Heart left ventricle (tissue), 16 donors: ENCODE measurements at regions of chr6 and their contacts with region 1.

Region 1: GRCh38 chr6:112153926-112154607 is 66.7 kb downstream of the FAM229B start:
- DNase-seq: no peak
- ATAC-seq: no peak
- H3K4me3 ChIP-seq: no peak overlapping the region
- H3K27ac ChIP-seq: peak overlapping the region in 3 of 12 donors; percentile 23 to 70 (median 28)
- H3K4me1 ChIP-seq: peaks cover 0 to 32% (median 11%) of the 10 kb centered on the region in 12 donors
- H3K27me3 ChIP-seq: no peaks in the 10 kb centered on the region
- CTCF ChIP-seq: no peak
- POLR2A ChIP-seq: no peak

Region 2: GRCh38 chr6:112076200-112076599 is 77.9 kb before region 1 on chr6:
- intact Hi-C with region 1: loop called in 1 of 10 experiments (anchors 10 kb)
- DNase-seq: no peak
- ATAC-seq: no peak
- H3K4me3 ChIP-seq: no peak overlapping the region
- H3K27ac ChIP-seq: peak overlapping the region in 1 of 12 donors; percentile 8
- H3K4me1 ChIP-seq: no peaks in the 10 kb centered on the region
- H3K27me3 ChIP-seq: no peaks in the 10 kb centered on the region
- CTCF ChIP-seq: no peak
- POLR2A ChIP-seq: no peak

Region 3: DNA sequence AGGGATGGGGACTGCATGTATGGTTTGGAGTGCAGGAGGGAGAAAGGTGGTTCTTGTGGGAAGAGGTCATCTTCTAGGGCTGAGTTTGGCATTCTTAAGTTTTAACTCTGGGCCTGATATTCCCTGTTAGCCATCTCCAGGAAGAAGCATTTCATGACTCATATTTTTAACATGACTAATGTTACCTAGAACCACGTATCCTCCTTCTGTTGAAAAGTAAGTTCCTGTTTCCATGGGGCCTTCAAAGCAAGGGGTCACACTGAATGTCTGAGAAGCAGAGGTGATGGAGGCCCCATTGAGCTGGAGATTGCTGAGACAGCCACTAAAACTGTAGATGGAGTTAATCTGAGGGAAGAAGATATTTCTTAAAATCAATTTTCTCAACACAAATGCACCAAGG is 36.5 kb before region 1 on chr6:
- intact Hi-C with region 1: loop called in 1 of 10 experiments (anchors 5 kb)
- DNase-seq: no peak
- ATAC-seq: peak in 1 of 4 donors; percentile 16
- H3K4me3 ChIP-seq: no peak overlapping the region
- H3K27ac ChIP-seq: peak overlapping the region in 1 of 12 donors; percentile 6
- H3K4me1 ChIP-seq: peaks cover 0 to 20% (median 8%) of the 10 kb centered on the region in 12 donors
- H3K27me3 ChIP-seq: no peaks in the 10 kb centered on the region
- CTCF ChIP-seq: no peak
- POLR2A ChIP-seq: no peak